ENCODE measurements at regions of chr3 and their contacts with region 1.

Region 1: DNA sequence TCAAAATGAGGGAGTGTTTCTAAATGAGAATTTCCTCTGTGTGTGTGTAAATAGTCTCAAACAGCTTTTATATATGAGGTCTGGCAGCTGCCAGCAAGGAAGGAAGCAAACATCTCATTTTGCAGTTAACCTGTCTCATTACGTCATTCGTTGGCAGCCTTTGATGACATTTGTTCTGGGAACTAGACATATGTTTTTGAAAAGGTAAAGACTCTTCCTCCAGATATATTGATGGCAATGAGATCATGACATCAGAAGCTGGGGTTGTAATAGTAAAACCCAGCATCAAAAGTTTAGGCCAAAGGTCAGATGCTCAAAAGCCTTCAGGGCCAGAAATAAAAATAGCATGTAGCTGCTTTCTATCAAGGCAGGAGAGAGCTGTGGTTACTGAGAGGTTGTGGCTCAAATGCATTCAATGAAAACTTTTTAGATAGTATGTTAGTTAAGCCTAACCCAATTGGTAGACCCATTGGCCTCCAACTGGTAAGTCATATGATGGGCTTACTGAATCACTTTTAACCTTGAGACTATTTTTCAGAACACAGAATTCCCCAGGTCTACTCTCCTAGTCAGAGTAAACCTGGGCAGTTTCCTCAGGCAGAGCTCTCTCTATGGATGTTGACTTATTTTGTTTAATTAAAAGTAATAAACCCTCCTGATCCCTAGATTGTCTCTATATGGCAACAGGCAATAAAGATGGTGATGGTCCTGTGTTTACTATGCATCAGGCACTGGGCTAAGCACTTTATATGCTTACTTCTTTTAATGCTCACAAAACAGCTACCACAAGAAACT is 386.5 kb upstream of the CFAP20DC start:
- DNase-seq: peak in 6 of 10 donors; percentile 10 to 74 (median 58)
- ATAC-seq: peak; percentile 82 to 90
- H3K4me3 Mint-ChIP-seq: peak overlapping the region in 2 of 10 donors; percentile 15 to 23
- H3K27ac Mint-ChIP-seq: peak overlapping the region; percentile 60 to 95 (median 86)
- H3K4me1 Mint-ChIP-seq: peaks cover 6 to 22% (median 13%) of the 10 kb centered on the region in 4 donors
- H3K27me3 Mint-ChIP-seq: no peaks in the 10 kb centered on the region

Region 2: GRCh38 chr3:59406943-59407342 is 29.4 kb before region 1 on chr3:
- POLR2A ChIA-PET with region 1: no interaction called
- DNase-seq: no peak
- ATAC-seq: peak in 1 of 2 donors; percentile 20
- H3K4me3 Mint-ChIP-seq: peak overlapping the region in 2 of 10 donors; percentile 40 to 49
- H3K27ac Mint-ChIP-seq: peak overlapping the region in 5 of 10 donors; percentile 57 to 80 (median 73)
- H3K4me1 Mint-ChIP-seq: peaks cover 11 to 31% (median 22%) of the 10 kb centered on the region in 4 donors
- H3K27me3 Mint-ChIP-seq: no peaks in the 10 kb centered on the region

Region 3: DNA sequence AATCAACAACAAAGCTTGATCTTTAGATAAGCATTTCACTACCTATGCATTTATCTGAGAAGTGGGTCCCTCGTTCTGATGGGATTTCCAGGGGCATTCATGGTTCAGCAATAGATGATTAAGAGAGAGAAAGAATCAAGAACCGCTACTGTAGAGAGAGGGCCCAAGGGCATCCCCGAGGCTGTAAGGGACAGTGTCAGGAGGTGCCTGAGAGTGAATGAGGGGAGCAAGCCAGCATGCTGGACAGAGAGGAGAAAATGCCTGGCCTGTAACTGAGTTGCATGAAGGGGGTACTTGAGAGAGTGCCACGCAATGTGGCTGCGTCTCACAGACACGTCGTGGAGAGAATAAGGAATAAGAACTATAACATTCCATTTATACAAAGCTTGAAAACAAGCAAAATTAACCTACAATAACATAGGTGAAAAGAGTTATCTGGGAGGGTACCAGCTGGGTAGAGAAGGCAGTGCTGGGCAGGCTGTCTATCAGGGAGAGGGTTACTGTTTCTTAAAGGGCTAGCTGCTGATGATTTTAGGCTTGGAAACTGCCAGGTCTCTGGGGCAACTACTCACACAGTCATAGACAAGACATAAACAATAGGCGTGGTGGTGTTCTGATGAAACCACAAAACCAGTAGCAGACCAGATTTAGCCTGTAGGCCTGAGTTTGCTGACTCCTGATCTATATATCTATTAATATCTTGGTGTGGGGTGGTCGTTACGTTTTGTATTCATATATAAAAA is 11.9 kb before region 1 on chr3:
- POLR2A ChIA-PET with region 1: interaction called, 11 read pairs
- DNase-seq: peak in 4 of 10 donors; percentile 3 to 58 (median 46)
- ATAC-seq: peak; percentile 70
- H3K4me3 Mint-ChIP-seq: peak overlapping the region in 9 of 10 donors; percentile 7 to 65 (median 28)
- H3K27ac Mint-ChIP-seq: peak overlapping the region; percentile 30 to 93 (median 75)
- H3K4me1 Mint-ChIP-seq: peaks cover 28 to 55% (median 48%) of the 10 kb centered on the region in 4 donors
- H3K27me3 Mint-ChIP-seq: no peaks in the 10 kb centered on the region

Region 4: DNA sequence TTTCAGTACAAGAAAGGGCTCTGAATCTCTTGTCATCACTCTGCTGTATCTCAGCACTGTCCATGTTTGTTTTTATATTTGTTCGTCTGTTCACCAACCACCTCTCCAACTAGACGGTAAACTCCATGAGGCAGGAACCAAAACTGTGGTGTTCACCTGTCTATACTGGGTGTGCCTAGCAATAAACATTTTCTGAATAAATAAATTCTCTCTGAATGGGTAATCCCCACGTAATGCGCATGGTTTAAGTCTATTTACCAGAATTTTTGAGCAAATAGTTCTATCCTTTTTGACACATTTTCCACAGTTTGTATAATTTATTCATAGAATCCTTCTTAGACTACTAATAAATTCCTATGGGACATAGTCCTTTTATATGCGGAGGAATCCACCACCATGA is 14.1 kb after region 1 on chr3:
- POLR2A ChIA-PET with region 1: interaction called, 11 read pairs
- DNase-seq: no peak
- ATAC-seq: no peak
- H3K4me3 Mint-ChIP-seq: peak overlapping the region in 6 of 10 donors; percentile 13 to 87 (median 74)
- H3K27ac Mint-ChIP-seq: peak overlapping the region; percentile 95 to 99 (median 96)
- H3K4me1 Mint-ChIP-seq: peaks cover 54 to 91% (median 85%) of the 10 kb centered on the region in 4 donors
- H3K27me3 Mint-ChIP-seq: no peaks in the 10 kb centered on the region

Region 5: GRCh38 chr3:59469948-59470723 is 33.8 kb after region 1 on chr3:
- POLR2A ChIA-PET with region 1: no interaction called
- DNase-seq: no peak
- ATAC-seq: no peak
- H3K4me3 Mint-ChIP-seq: peak overlapping the region in 1 of 10 donors; percentile 14
- H3K27ac Mint-ChIP-seq: peak overlapping the region in 7 of 10 donors; percentile 16 to 57 (median 32)
- H3K4me1 Mint-ChIP-seq: peaks cover 11 to 32% (median 20%) of the 10 kb centered on the region in 4 donors
- H3K27me3 Mint-ChIP-seq: no peaks in the 10 kb centered on the region